T-cell (primary cell): ENCODE measurements at regions of chr3 and their contacts with region 1.

Region 1: GRCh38 chr3:11350374-11350773 is 78.2 kb downstream of the ATG7 start:
- DNase-seq: no peak
- ATAC-seq: no peak
- H3K4me3 ChIP-seq: no peak overlapping the region
- H3K4me3 Mint-ChIP-seq: no peak overlapping the region
- H3K27ac ChIP-seq: no peak overlapping the region
- H3K27ac Mint-ChIP-seq: no peak overlapping the region
- H3K4me1 ChIP-seq: no peaks in the 10 kb centered on the region
- H3K4me1 Mint-ChIP-seq: no peaks in the 10 kb centered on the region
- H3K27me3 ChIP-seq: no peaks in the 10 kb centered on the region
- H3K27me3 Mint-ChIP-seq: no peaks in the 10 kb centered on the region

Region 2: DNA sequence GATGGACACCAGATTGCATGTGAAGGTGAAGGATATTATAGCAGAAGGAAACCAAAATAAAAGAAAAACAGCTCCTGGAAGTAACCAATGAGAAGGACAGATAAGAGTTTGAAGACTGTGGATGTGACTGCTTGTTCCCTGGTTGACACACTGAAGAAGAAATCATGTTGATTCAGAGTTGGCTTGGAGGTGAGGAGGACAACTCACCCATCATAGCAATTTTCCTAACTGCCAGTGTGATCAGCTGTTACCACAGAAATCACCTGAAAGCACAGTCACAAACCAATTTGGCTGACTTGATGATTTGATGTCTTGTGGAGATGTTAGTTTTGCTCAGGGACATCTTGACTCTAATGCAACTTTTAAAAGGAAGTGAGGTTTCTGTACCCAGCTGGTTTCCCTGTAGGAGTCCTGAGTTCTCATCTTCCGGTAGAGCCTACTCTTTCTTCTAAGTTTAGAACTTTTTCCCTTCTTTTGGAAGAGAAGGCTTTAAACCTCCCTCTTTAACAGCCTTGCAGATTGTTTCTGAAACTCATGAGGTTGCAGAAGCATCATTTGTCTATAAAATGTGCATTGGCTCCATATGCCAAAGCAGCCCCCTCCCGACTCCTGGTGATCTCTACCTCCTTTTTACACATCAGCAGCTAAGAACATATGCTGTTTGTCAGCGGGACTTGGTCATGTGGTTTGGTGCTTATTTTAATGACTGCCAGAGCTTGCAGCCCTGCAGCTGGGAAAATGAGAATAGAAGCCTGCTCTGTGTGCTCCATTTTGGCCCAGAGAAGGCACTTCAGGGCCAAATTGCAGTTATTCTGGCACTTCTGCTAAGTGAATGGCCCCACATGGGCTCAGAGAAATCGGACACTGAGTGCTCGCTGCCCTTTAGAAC is 67.9 kb before region 1 on chr3:
- CTCF ChIA-PET with region 1: no interaction called
- POLR2A ChIA-PET with region 1: no interaction called
- DNase-seq: no peak
- ATAC-seq: no peak
- H3K4me3 ChIP-seq: no peak overlapping the region
- H3K4me3 Mint-ChIP-seq: no peak overlapping the region
- H3K27ac ChIP-seq: no peak overlapping the region
- H3K27ac Mint-ChIP-seq: no peak overlapping the region
- H3K4me1 ChIP-seq: peaks cover under 1 to 3% of the 10 kb centered on the region in 2 experiments
- H3K4me1 Mint-ChIP-seq: peaks cover 14 to 21% (median 19%) of the 10 kb centered on the region in 3 donors
- H3K27me3 ChIP-seq: no peaks in the 10 kb centered on the region
- H3K27me3 Mint-ChIP-seq: no peaks in the 10 kb centered on the region

Region 3: GRCh38 chr3:11826628-11827265 is 476.4 kb after region 1 on chr3:
- CTCF ChIA-PET with region 1: no interaction called
- POLR2A ChIA-PET with region 1: interaction called in 1 of 2 experiments, 11 read pairs
- DNase-seq: no peak
- ATAC-seq: no peak
- H3K4me3 ChIP-seq: no peak overlapping the region
- H3K4me3 Mint-ChIP-seq: no peak overlapping the region
- H3K27ac ChIP-seq: no peak overlapping the region
- H3K27ac Mint-ChIP-seq: no peak overlapping the region
- H3K4me1 ChIP-seq: no peaks in the 10 kb centered on the region
- H3K4me1 Mint-ChIP-seq: peaks cover 0 to 4% (median 0%) of the 10 kb centered on the region in 3 donors
- H3K27me3 ChIP-seq: no peaks in the 10 kb centered on the region
- H3K27me3 Mint-ChIP-seq: no peaks in the 10 kb centered on the region

Region 4: GRCh38 chr3:12027184-12027846 is 676.9 kb after region 1 on chr3:
- CTCF ChIA-PET with region 1: no interaction called
- POLR2A ChIA-PET with region 1: no interaction called
- DNase-seq: no peak
- ATAC-seq: no peak
- H3K4me3 ChIP-seq: no peak overlapping the region
- H3K4me3 Mint-ChIP-seq: no peak overlapping the region
- H3K27ac ChIP-seq: no peak overlapping the region
- H3K27ac Mint-ChIP-seq: no peak overlapping the region
- H3K4me1 ChIP-seq: no peaks in the 10 kb centered on the region
- H3K4me1 Mint-ChIP-seq: no peaks in the 10 kb centered on the region
- H3K27me3 ChIP-seq: peaks cover 0 to 3% of the 10 kb centered on the region in 2 experiments
- H3K27me3 Mint-ChIP-seq: peaks cover 13 to 16% of the 10 kb centered on the region in 2 donors